ENCODE measurements at regions of chr2 and their contacts with region 1.

Region 1: DNA sequence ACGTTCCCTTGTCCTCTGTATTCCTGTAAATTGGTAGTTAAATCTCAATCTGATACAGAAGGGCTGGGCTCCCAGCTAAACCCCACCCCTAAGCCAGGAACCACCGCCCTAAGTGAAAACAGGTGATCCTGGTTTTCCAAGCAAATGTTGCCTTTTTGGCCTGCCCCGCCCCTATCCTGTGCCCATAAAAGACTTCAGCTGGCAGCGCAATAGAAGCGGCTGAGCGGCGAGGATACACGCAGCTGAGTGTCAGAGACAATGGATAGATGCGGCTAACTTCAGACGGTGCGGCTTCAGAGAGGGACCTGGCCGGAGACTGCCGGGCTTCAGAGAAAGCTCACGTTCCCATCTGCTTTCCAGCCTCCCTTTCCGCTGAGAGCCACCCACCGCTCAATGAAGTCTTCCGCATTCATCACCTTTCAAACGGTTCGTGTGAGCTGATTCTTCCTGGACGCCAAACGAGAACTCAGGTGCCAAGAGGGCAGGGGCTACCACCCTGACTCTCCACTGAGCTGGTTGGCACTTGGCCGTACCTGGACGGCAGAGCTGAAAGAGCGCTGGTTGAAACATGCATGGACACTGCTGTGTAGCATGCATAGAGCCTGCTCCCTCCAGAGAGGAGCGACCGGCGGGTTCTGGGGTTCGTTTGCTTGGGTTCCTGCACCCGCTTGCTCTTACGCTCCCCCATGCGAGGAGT is 49.5 kb upstream of the POLE4 start:
- DNase-seq: no peak
- H3K4me3 ChIP-seq: no peak overlapping the region
- H3K27ac ChIP-seq: no peak overlapping the region
- H3K4me1 ChIP-seq: no peaks in the 10 kb centered on the region
- CTCF ChIP-seq: no peak

Region 2: GRCh38 chr2:75627895-75628504 is 719.1 kb after region 1 on chr2:
- CTCF ChIA-PET with region 1: no interaction called
- POLR2A ChIA-PET with region 1: no interaction called
- intact Hi-C with region 1: loop called (anchors 10 kb)
- DNase-seq: peak; percentile 65
- H3K4me3 ChIP-seq: no peak overlapping the region
- H3K27ac ChIP-seq: no peak overlapping the region
- H3K4me1 ChIP-seq: no peaks in the 10 kb centered on the region
- CTCF ChIP-seq: peak; percentile 98